ENCODE measurements at regions of chr6 and their contacts with region 1.

Region 1: DNA sequence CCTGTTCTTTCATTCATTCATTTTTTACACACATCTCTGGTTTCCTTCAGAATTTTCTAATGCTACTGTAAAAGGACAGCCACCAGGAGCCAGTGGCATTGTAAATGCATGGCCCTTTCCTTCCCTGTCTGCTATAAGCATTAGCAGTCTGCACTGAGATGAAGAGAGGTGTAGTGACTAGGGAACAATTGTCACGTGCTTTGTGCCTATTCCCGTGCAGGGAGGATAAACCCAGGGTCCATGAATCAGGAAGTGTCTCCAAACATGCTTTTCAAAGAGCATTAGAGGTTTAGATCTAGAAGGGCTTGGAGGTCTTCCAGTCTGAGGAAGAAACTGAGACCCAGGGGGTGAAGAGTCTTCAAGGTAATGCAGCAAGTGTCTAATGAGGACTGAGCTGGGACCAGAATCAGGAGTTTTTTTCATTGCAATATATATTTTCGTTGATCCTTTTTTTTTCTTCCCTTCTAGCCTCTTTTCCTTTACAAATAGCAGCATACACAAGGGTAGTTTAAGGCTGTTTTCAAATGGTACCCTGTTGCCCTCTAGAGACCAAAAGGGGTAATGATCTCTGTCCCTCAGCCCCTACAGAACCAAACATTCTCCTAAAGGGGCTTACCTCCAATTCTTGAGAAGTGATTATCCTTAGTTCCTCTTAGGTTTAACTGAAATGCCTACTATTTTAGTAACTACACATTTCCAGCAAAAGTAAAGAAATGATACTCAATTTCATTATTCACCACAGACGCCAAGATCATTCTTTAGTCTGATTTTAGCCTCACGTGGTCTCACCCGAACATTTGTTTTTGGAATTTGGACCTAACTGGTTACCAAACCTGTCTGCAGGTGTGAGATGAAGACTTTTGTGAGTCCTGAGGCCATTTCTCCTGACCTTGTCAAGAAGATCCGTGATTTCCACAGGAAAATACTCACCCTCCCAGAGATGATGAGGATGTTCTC is 6.6 kb downstream of the TRIM15 start:
- DNase-seq: peak; percentile 78
- ATAC-seq: peak; percentile 88
- H3K4me3 ChIP-seq: no peak overlapping the region
- H3K27ac ChIP-seq: no peak overlapping the region
- H3K4me1 ChIP-seq: no peaks in the 10 kb centered on the region
- H3K27me3 ChIP-seq: peaks cover 12% of the 10 kb centered on the region
- CTCF ChIP-seq: peak; percentile 90

Region 2: GRCh38 chr6:29705389-29706231 is 464.3 kb before region 1 on chr6:
- CTCF ChIA-PET with region 1: no interaction called
- POLR2A ChIA-PET with region 1: no interaction called
- intact Hi-C with region 1: loop called (anchors 5 kb)
- DNase-seq: peak; percentile 78
- ATAC-seq: peak; percentile 73
- H3K4me3 ChIP-seq: no peak overlapping the region
- H3K27ac ChIP-seq: no peak overlapping the region
- H3K4me1 ChIP-seq: no peaks in the 10 kb centered on the region
- H3K27me3 ChIP-seq: peaks cover 24% of the 10 kb centered on the region
- CTCF ChIP-seq: peak; percentile 78

Region 3: GRCh38 chr6:29847871-29848630 is 321.9 kb before region 1 on chr6:
- CTCF ChIA-PET with region 1: no interaction called
- POLR2A ChIA-PET with region 1: no interaction called
- intact Hi-C with region 1: loop called (anchors 10 kb)
- DNase-seq: peak; percentile 80
- ATAC-seq: peak; percentile 90
- H3K4me3 ChIP-seq: no peak overlapping the region
- H3K27ac ChIP-seq: no peak overlapping the region
- H3K4me1 ChIP-seq: no peaks in the 10 kb centered on the region
- H3K27me3 ChIP-seq: no peaks in the 10 kb centered on the region
- CTCF ChIP-seq: peak; percentile 95

Region 4: DNA sequence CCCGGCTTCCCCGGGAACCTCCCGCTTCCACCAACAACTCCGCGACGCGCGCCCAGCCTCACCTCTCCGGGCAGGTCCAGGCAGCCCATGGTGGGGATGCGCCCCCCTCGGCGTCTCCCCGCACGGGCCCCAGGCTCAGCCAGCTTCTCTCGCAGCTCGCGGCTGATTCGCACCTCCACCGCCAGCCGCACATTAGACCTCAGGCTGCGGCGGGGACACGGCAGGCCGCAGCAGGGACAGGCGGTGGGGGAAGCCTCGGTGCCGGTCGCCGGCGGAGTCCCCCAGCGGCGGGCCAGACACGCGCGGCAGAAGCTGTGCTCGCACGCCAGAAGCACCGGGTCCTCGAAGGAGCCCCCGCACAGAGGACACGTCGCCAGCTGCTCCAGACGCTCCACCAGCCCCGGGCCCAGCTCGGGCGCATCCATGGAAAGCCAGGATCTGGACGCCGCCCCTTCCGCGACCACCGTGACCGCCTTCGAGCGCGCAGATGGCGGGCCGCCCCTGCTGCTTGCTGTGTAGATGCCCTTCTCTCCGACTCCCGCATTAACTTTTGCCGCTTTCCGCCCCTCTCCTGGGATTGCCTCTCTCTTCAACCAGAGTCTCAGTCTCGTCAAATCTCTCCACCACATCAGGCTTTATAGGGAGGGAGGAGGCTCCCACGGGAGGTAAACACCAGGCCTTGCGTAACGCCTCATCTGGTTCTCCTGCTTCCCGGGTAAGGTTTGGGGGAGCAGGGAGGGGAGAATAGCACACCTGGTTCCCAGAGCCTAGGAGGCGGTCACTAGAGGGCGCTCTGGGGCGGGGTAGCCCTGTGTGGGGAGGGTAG is 94.6 kb before region 1 on chr6 and contains the start of gene RNF39:
- CTCF ChIA-PET with region 1: no interaction called
- POLR2A ChIA-PET with region 1: interaction called, 10 read pairs
- intact Hi-C with region 1: no loop called
- DNase-seq: peak; percentile 78
- ATAC-seq: peak; percentile 54
- H3K4me3 ChIP-seq: peak within 1 kb of the TSS; percentile 75
- H3K27ac ChIP-seq: no peak within 1 kb of the TSS
- H3K4me1 ChIP-seq: peaks cover 40% of the 10 kb centered on the region
- H3K27me3 ChIP-seq: 0 out of 2 replicates have a peak, but pooled peaks cover 3% of the 10 kb centered on the region
- CTCF ChIP-seq: peak; percentile 70
- total RNA-seq, gene RNF39: 2.0 and 4.2 TPM in 2 replicates

Region 5: GRCh38 chr6:30102970-30103874 is 66.7 kb before region 1 on chr6:
- CTCF ChIA-PET with region 1: interaction called, 3 read pairs
- POLR2A ChIA-PET with region 1: no interaction called
- intact Hi-C with region 1: loop called (anchors 1 kb)
- DNase-seq: peak; percentile 94
- ATAC-seq: peak; percentile 55
- H3K4me3 ChIP-seq: peak overlapping the region; percentile 75
- H3K27ac ChIP-seq: no peak overlapping the region
- H3K4me1 ChIP-seq: peaks cover 31% of the 10 kb centered on the region
- H3K27me3 ChIP-seq: no peaks in the 10 kb centered on the region
- CTCF ChIP-seq: peak; percentile 87

Region 6: GRCh38 chr6:30130887-30131862 is 38.8 kb before region 1 on chr6:
- CTCF ChIA-PET with region 1: no interaction called
- POLR2A ChIA-PET with region 1: no interaction called
- intact Hi-C with region 1: loop called (anchors 5 kb)
- DNase-seq: peak; percentile 87
- ATAC-seq: peak; percentile 93
- H3K4me3 ChIP-seq: peak overlapping the region; percentile 55
- H3K27ac ChIP-seq: no peak overlapping the region
- H3K4me1 ChIP-seq: peaks cover 23% of the 10 kb centered on the region
- H3K27me3 ChIP-seq: no peaks in the 10 kb centered on the region
- CTCF ChIP-seq: peak; percentile 100

Region 7: DNA sequence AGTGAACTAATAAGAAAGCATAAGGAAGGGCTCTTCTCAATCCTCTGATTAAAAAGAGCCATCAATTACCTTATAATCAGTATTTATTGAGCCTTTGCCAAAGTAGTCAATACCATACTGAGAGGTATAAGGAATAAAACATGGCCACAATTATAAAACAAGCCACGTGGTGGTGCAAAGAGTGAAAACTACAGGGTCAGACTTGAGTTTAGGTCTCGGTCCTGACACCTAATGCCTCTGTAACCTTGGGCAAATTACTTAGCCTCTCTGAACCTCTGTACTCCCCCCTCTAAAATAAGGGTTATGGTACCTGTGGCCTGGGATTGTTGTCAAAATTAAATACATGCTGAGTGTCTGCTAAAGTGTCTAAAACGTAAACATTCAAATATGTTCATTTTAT is 20.7 kb before region 1 on chr6:
- CTCF ChIA-PET with region 1: no interaction called
- POLR2A ChIA-PET with region 1: no interaction called
- intact Hi-C with region 1: loop called (anchors 1 kb)
- DNase-seq: peak; percentile 13
- ATAC-seq: 0 out of 2 replicates have a peak, but pooled peaks have one; percentile 40
- H3K4me3 ChIP-seq: no peak overlapping the region
- H3K27ac ChIP-seq: no peak overlapping the region
- H3K4me1 ChIP-seq: peaks cover 4% of the 10 kb centered on the region
- H3K27me3 ChIP-seq: 0 out of 2 replicates have a peak, but pooled peaks cover 1% of the 10 kb centered on the region
- CTCF ChIP-seq: peak; percentile 36

Measured in PC-3 (cell line).